Naive thymus-derived CD4-positive, alpha-beta T cell (primary cell): ENCODE measurements at regions of chr9 and their contacts with region 1.

Region 1: GRCh38 chr9:93082841-93083411 is 13.1 kb upstream of the CARD19 start:
- DNase-seq: peak in 1 of 9 donors; percentile 25
- ATAC-seq: peak; percentile 36
- H3K4me3 ChIP-seq: no peak overlapping the region
- H3K4me3 Mint-ChIP-seq: peak overlapping the region in 7 of 10 donors; percentile 1 to 65 (median 57)
- H3K27ac ChIP-seq: peak overlapping the region; percentile 68
- H3K27ac Mint-ChIP-seq: peak overlapping the region; percentile 49 to 98 (median 95)
- H3K4me1 ChIP-seq: peaks cover 18 to 25% of the 10 kb centered on the region in 2 donors
- H3K4me1 Mint-ChIP-seq: peaks cover 10 to 47% (median 31%) of the 10 kb centered on the region in 7 donors
- H3K27me3 ChIP-seq: no peaks in the 10 kb centered on the region
- H3K27me3 Mint-ChIP-seq: no peaks in the 10 kb centered on the region

Region 2: GRCh38 chr9:92986176-92987085 is 96.5 kb before region 1 on chr9:
- CTCF ChIA-PET with region 1: no interaction called
- POLR2A ChIA-PET with region 1: no interaction called
- intact Hi-C with region 1: no loop called
- DNase-seq: peak in 7 of 9 donors; percentile 52 to 66 (median 57)
- ATAC-seq: peak; percentile 75
- H3K4me3 ChIP-seq: no peak overlapping the region
- H3K4me3 Mint-ChIP-seq: peak overlapping the region; percentile 34 to 71 (median 62)
- H3K27ac ChIP-seq: peak overlapping the region; percentile 59
- H3K27ac Mint-ChIP-seq: peak overlapping the region; percentile 56 to 95 (median 86)
- H3K4me1 ChIP-seq: peaks cover 65 to 71% of the 10 kb centered on the region in 2 donors
- H3K4me1 Mint-ChIP-seq: peaks cover 66 to 93% (median 89%) of the 10 kb centered on the region in 7 donors
- H3K27me3 ChIP-seq: no peaks in the 10 kb centered on the region
- H3K27me3 Mint-ChIP-seq: no peaks in the 10 kb centered on the region

Region 3: GRCh38 chr9:93064392-93065134 is 18.4 kb before region 1 on chr9:
- CTCF ChIA-PET with region 1: no interaction called
- POLR2A ChIA-PET with region 1: interaction called, 60 read pairs
- intact Hi-C with region 1: loop called (anchors 1 to 2 kb)
- DNase-seq: peak; percentile 54 to 95 (median 90)
- ATAC-seq: peak; percentile 96
- H3K4me3 ChIP-seq: peak overlapping the region; percentile 90
- H3K4me3 Mint-ChIP-seq: peak overlapping the region; percentile 87 to 97 (median 92)
- H3K27ac ChIP-seq: peak overlapping the region; percentile 88
- H3K27ac Mint-ChIP-seq: peak overlapping the region; percentile 97 to 100 (median 99)
- H3K4me1 ChIP-seq: peaks cover 63 to 87% of the 10 kb centered on the region in 2 donors
- H3K4me1 Mint-ChIP-seq: peaks cover 71 to 95% (median 86%) of the 10 kb centered on the region in 7 donors
- H3K27me3 ChIP-seq: no peaks in the 10 kb centered on the region
- H3K27me3 Mint-ChIP-seq: no peaks in the 10 kb centered on the region

Region 4: GRCh38 chr9:93549611-93550010 is 466.7 kb after region 1 on chr9:
- CTCF ChIA-PET with region 1: no interaction called
- POLR2A ChIA-PET with region 1: no interaction called
- intact Hi-C with region 1: no loop called
- DNase-seq: no peak
- ATAC-seq: no peak
- H3K4me3 ChIP-seq: no peak overlapping the region
- H3K4me3 Mint-ChIP-seq: no peak overlapping the region
- H3K27ac ChIP-seq: no peak overlapping the region
- H3K27ac Mint-ChIP-seq: peak overlapping the region in 4 of 9 donors; percentile 4 to 51 (median 28)
- H3K4me1 ChIP-seq: no peaks in the 10 kb centered on the region
- H3K4me1 Mint-ChIP-seq: peaks cover 0 to 13% (median 0%) of the 10 kb centered on the region in 7 donors
- H3K27me3 ChIP-seq: no peaks in the 10 kb centered on the region
- H3K27me3 Mint-ChIP-seq: no peaks in the 10 kb centered on the region